ENCODE measurements at regions of chr9 and their contacts with region 1.

Region 1: GRCh38 chr9:121201738-121202533 is at the start of gene RAB14:
- DNase-seq: peak; percentile 99 to 100 (median 100)
- ATAC-seq: peak; percentile 95
- H3K4me3 ChIP-seq: peak within 1 kb of the TSS; percentile 71
- H3K4me3 Mint-ChIP-seq: peak within 1 kb of the TSS; percentile 79 to 100 (median 94)
- H3K27ac ChIP-seq: peak within 1 kb of the TSS; percentile 92
- H3K27ac Mint-ChIP-seq: peak within 1 kb of the TSS; percentile 88 to 98 (median 95)
- H3K4me1 ChIP-seq: peaks cover 24 to 34% of the 10 kb centered on the region in 2 donors
- H3K4me1 Mint-ChIP-seq: peaks cover 33 to 62% (median 50%) of the 10 kb centered on the region in 7 donors
- H3K27me3 ChIP-seq: no peaks in the 10 kb centered on the region
- H3K27me3 Mint-ChIP-seq: peaks cover 0 to 3% (median 0%) of the 10 kb centered on the region in 5 donors
- total RNA-seq, gene RAB14: 43.9 to 66.5 (median 60.7) TPM

Region 2: GRCh38 chr9:120579750-120580590 is 622.0 kb before region 1 on chr9 and contains the start of gene CDK5RAP2:
- CTCF ChIA-PET with region 1: no interaction called
- POLR2A ChIA-PET with region 1: no interaction called
- intact Hi-C with region 1: loop called in 1 of 2 experiments (anchors 5 kb)
- DNase-seq: peak; percentile 77 to 94 (median 92)
- ATAC-seq: peak; percentile 99
- H3K4me3 ChIP-seq: peak within 1 kb of the TSS; percentile 85
- H3K4me3 Mint-ChIP-seq: peak within 1 kb of the TSS; percentile 86 to 98 (median 94)
- H3K27ac ChIP-seq: peak within 1 kb of the TSS; percentile 81
- H3K27ac Mint-ChIP-seq: peak within 1 kb of the TSS; percentile 88 to 95 (median 91)
- H3K4me1 ChIP-seq: peaks cover 15 to 17% of the 10 kb centered on the region in 2 donors
- H3K4me1 Mint-ChIP-seq: peaks cover 29 to 68% (median 62%) of the 10 kb centered on the region in 7 donors
- H3K27me3 ChIP-seq: no peaks in the 10 kb centered on the region
- H3K27me3 Mint-ChIP-seq: peaks cover 0 to 3% (median 0%) of the 10 kb centered on the region in 5 donors
- total RNA-seq, gene CDK5RAP2: 62.2 to 98.1 (median 78.1) TPM

Region 3: DNA sequence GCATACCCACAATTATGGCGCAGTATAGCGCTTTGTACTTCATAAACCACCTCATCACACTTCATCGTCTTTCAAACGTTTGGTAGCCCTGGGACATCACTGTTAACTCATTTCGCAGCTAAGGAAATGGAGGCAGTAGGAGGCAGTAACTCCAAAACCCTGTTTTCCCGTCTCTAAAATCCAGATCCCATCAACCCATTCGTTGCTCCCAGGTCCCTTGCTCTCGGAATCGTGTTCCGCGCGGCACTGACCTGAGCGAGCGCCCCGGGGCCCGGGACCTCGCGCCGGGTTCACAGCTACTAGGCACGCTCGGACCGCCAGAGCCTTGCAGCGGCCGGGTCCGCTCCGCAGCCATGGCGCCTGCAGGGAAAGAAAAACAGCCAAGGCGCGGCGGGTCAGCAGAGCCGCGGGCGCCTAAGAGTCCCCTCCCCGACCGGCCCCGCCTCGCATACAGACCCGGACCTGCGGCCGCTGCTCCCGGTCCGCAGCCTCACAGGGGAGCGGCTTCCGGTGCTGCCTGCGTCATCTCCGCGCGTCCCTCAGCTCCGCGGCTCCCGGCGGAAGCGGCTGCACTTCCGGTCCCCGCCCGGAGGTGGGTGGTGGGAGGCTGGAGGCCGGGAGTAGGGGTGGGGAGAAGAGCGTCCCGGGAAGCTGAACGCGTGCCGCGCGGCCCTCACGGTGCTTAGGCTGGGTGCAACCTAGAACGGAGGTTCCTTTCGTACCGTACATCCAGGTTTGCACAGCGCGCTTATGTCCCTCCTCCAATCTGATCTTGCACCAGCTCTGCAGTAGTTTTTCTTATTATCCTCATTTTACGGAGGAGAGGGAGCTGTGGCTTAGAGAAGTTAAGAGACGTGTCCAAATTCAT is 408.8 kb before region 1 on chr9 and contains the start of gene FBXW2:
- CTCF ChIA-PET with region 1: no interaction called
- POLR2A ChIA-PET with region 1: interaction called, 8 read pairs
- intact Hi-C with region 1: loop called (anchors 1 kb)
- DNase-seq: peak; percentile 65 to 96 (median 78)
- ATAC-seq: peak; percentile 91
- H3K4me3 ChIP-seq: peak within 1 kb of the TSS; percentile 66
- H3K4me3 Mint-ChIP-seq: peak within 1 kb of the TSS; percentile 91 to 98 (median 96)
- H3K27ac ChIP-seq: peak within 1 kb of the TSS; percentile 92
- H3K27ac Mint-ChIP-seq: peak within 1 kb of the TSS; percentile 88 to 98 (median 95)
- H3K4me1 ChIP-seq: peaks cover 28 to 34% of the 10 kb centered on the region in 2 donors
- H3K4me1 Mint-ChIP-seq: peaks cover 34 to 65% (median 58%) of the 10 kb centered on the region in 7 donors
- H3K27me3 ChIP-seq: no peaks in the 10 kb centered on the region
- H3K27me3 Mint-ChIP-seq: no peaks in the 10 kb centered on the region
- total RNA-seq, gene FBXW2: 72.5 to 90.3 (median 77.9) TPM

Region 4: GRCh38 chr9:120877276-120878034 is 324.5 kb before region 1 on chr9:
- CTCF ChIA-PET with region 1: no interaction called
- POLR2A ChIA-PET with region 1: no interaction called
- intact Hi-C with region 1: no loop called
- DNase-seq: peak; percentile 46 to 79 (median 61)
- ATAC-seq: peak; percentile 69
- H3K4me3 ChIP-seq: peak overlapping the region; percentile 82
- H3K4me3 Mint-ChIP-seq: peak overlapping the region; percentile 89 to 98 (median 94)
- H3K27ac ChIP-seq: peak overlapping the region; percentile 94
- H3K27ac Mint-ChIP-seq: peak overlapping the region; percentile 93 to 99 (median 96)
- H3K4me1 ChIP-seq: peaks cover 41 to 51% of the 10 kb centered on the region in 2 donors
- H3K4me1 Mint-ChIP-seq: peaks cover 41 to 82% (median 78%) of the 10 kb centered on the region in 7 donors
- H3K27me3 ChIP-seq: no peaks in the 10 kb centered on the region
- H3K27me3 Mint-ChIP-seq: no peaks in the 10 kb centered on the region

Region 5: DNA sequence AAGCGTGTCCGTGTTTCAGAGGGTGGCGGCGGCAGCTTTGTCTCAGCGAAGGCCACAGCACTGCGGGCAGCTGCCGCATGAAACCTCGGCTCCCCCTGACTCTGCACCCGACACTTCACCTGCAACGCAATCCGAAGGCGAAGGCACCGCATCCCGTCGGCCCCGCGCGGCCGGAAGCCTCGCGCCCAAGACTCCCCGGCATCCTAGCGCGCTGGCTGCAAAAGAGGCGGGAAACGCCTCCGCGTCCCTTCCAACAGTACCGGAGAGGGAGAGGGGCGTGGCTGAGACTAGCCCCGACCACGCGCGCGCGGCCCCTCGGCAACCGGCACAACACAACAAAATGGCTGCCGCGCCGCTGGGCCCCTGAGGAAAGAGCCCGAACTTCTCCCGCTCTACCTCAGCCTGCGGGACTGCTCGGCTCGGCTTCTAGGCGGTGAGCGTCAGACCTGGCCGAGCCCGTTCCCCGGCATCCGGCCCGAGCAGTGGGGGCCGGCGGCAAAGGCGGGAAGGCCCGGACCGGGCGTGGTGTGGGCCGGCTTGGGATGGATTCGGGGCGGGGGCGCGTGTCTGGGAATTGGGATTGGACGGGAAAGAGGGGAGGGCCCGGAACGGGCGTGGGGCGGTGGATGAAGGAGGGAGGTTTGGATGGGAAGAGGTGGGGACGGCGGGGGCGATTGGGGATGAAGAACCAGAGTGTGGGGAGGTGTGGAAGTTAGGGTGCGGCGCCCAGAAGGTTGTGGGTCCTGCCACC is 127.1 kb before region 1 on chr9 and contains the start of gene CNTRL:
- CTCF ChIA-PET with region 1: interaction called, 3 read pairs
- POLR2A ChIA-PET with region 1: interaction called, 5 read pairs
- intact Hi-C with region 1: loop called (anchors 1 kb)
- DNase-seq: peak; percentile 63 to 92 (median 81)
- ATAC-seq: peak; percentile 90
- H3K4me3 ChIP-seq: peak within 1 kb of the TSS; percentile 90
- H3K4me3 Mint-ChIP-seq: peak within 1 kb of the TSS; percentile 87 to 100 (median 99)
- H3K27ac ChIP-seq: peak within 1 kb of the TSS; percentile 92
- H3K27ac Mint-ChIP-seq: peak within 1 kb of the TSS; percentile 80 to 99 (median 93)
- H3K4me1 ChIP-seq: peaks cover 22 to 24% of the 10 kb centered on the region in 2 donors
- H3K4me1 Mint-ChIP-seq: peaks cover 27 to 65% (median 50%) of the 10 kb centered on the region in 7 donors
- H3K27me3 ChIP-seq: no peaks in the 10 kb centered on the region
- H3K27me3 Mint-ChIP-seq: no peaks in the 10 kb centered on the region
- total RNA-seq, gene CNTRL: 74.5 to 131 (median 88.6) TPM

Region 6: DNA sequence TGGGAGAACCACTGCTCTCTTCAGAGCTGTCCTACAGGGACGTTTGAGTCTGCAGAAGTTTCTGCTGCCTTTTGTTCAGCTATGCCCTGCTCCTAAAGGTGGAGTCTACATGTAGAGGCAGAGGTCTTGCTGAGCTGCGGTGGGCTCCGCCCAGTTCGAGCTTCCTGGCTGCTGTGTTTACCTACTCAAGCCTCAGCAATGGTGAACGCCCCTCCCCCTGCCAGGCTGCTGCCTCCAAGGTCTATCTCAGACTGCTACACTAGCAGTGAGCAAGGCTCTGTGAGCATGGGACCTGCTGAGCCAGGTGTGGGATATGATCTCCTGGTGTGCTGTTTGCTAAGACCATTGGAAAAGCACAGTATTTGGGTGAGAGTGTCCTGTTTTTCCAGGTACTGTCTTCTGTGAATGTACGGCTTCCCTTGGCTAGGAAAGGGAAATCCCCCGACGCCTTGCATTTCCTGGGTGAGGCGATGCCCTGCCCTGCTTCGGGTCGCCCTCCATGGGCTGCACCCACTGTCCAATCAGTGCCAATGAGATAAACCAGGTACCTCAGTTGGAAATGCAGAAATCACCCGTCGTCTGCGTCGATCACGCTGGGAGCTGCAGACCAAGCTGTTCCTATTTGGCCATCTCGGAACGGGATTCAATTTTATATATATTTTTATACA is 68.7 kb before region 1 on chr9:
- CTCF ChIA-PET with region 1: no interaction called
- POLR2A ChIA-PET with region 1: interaction called, 8 read pairs
- intact Hi-C with region 1: loop called in 1 of 2 experiments (anchors 1 kb)
- DNase-seq: peak; percentile 39 to 88 (median 79)
- ATAC-seq: peak; percentile 99
- H3K4me3 ChIP-seq: peak overlapping the region; percentile 51
- H3K4me3 Mint-ChIP-seq: peak overlapping the region; percentile 21 to 82 (median 74)
- H3K27ac ChIP-seq: peak overlapping the region; percentile 46
- H3K27ac Mint-ChIP-seq: peak overlapping the region; percentile 76 to 99 (median 90)
- H3K4me1 ChIP-seq: peaks cover 23 to 40% of the 10 kb centered on the region in 2 donors
- H3K4me1 Mint-ChIP-seq: peaks cover 48 to 90% (median 82%) of the 10 kb centered on the region in 7 donors
- H3K27me3 ChIP-seq: no peaks in the 10 kb centered on the region
- H3K27me3 Mint-ChIP-seq: no peaks in the 10 kb centered on the region

Region 7: GRCh38 chr9:121185178-121185745 is 16.7 kb before region 1 on chr9:
- CTCF ChIA-PET with region 1: interaction called, 5 read pairs
- POLR2A ChIA-PET with region 1: interaction called, 45 read pairs
- intact Hi-C with region 1: loop called in 1 of 2 experiments (anchors 1 kb)
- DNase-seq: no peak
- ATAC-seq: peak; percentile 55
- H3K4me3 ChIP-seq: no peak overlapping the region
- H3K4me3 Mint-ChIP-seq: peak overlapping the region in 4 of 10 donors; percentile 5 to 40 (median 30)
- H3K27ac ChIP-seq: peak overlapping the region; percentile 45
- H3K27ac Mint-ChIP-seq: peak overlapping the region in 8 of 9 donors; percentile 36 to 93 (median 86)
- H3K4me1 ChIP-seq: peaks cover 17% of the 10 kb centered on the region in 2 donors
- H3K4me1 Mint-ChIP-seq: peaks cover 27 to 81% (median 70%) of the 10 kb centered on the region in 7 donors
- H3K27me3 ChIP-seq: no peaks in the 10 kb centered on the region
- H3K27me3 Mint-ChIP-seq: no peaks in the 10 kb centered on the region

Region 8: DNA sequence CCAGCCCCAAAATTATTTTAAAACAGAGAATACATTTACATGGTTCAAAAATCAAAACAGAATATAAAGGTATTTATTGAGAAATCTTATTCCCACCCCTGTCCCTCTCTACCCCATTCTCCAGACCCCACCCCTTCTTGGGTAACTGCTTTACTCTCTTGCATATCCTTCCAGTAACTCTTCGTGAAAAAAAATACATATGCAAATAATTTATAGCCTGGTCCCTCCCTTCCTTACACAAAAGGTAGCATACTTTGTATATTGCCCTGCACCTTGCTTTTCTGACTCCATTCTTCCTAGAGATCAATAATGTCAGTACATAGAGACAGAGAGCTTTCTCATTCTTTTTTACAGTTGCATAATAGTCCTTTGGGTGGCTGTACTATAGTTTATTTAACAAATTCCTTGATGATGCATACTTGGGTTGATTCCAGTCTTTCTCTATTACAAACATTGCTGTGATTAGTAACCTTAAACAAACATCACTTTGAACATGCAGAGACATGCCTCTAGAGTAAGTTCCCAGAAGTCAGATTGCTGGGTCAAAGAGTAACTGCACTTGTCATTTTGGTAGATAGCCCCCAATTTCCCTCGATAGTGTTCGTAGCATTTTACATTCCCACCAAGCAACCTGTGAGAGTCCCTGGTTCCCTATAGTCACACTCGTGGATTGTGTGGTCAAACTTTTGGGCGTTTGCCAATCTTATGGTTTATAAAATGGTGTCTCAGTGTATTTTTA is 120.3 kb after region 1 on chr9:
- CTCF ChIA-PET with region 1: no interaction called
- POLR2A ChIA-PET with region 1: no interaction called
- intact Hi-C with region 1: loop called in 1 of 2 experiments (anchors 2 kb)
- DNase-seq: no peak
- ATAC-seq: no peak
- H3K4me3 ChIP-seq: no peak overlapping the region
- H3K4me3 Mint-ChIP-seq: no peak overlapping the region
- H3K27ac ChIP-seq: no peak overlapping the region
- H3K27ac Mint-ChIP-seq: no peak overlapping the region
- H3K4me1 ChIP-seq: peaks cover 5 to 16% of the 10 kb centered on the region in 2 donors
- H3K4me1 Mint-ChIP-seq: peaks cover 0 to 35% (median 7%) of the 10 kb centered on the region in 7 donors
- H3K27me3 ChIP-seq: no peaks in the 10 kb centered on the region
- H3K27me3 Mint-ChIP-seq: no peaks in the 10 kb centered on the region

Region 9: DNA sequence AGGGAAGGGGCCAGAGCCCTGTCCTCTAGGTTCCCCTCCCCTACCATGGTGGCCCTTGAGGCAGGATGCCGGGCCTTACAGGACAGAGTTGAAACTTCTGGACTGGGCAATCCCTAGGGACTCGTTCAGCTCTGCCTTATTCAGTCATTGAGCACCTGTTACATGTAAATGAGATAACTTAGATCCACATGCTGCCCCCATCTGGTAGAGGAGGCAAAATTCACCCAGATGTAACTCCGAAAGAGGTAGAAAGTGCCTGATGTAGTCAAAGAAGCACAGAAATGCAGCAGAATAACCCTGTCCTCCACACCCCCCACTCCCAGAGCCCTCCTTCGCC is 296.2 kb after region 1 on chr9:
- CTCF ChIA-PET with region 1: no interaction called
- POLR2A ChIA-PET with region 1: no interaction called
- intact Hi-C with region 1: no loop called
- DNase-seq: peak in 6 of 9 donors; percentile 18 to 41 (median 22)
- ATAC-seq: peak; percentile 67
- H3K4me3 ChIP-seq: peak overlapping the region; percentile 33
- H3K4me3 Mint-ChIP-seq: peak overlapping the region; percentile 70 to 89 (median 80)
- H3K27ac ChIP-seq: no peak overlapping the region
- H3K27ac Mint-ChIP-seq: no peak overlapping the region
- H3K4me1 ChIP-seq: peaks cover 4 to 10% of the 10 kb centered on the region in 2 donors
- H3K4me1 Mint-ChIP-seq: peaks cover 16 to 26% (median 20%) of the 10 kb centered on the region in 7 donors
- H3K27me3 ChIP-seq: peaks cover 3 to 8% of the 10 kb centered on the region in 2 donors
- H3K27me3 Mint-ChIP-seq: peaks cover 58 to 68% (median 63%) of the 10 kb centered on the region in 5 donors